CD4-positive, alpha-beta memory T cell (primary cell): ENCODE measurements at regions of chr11 and their contacts with region 1.

Region 1: DNA sequence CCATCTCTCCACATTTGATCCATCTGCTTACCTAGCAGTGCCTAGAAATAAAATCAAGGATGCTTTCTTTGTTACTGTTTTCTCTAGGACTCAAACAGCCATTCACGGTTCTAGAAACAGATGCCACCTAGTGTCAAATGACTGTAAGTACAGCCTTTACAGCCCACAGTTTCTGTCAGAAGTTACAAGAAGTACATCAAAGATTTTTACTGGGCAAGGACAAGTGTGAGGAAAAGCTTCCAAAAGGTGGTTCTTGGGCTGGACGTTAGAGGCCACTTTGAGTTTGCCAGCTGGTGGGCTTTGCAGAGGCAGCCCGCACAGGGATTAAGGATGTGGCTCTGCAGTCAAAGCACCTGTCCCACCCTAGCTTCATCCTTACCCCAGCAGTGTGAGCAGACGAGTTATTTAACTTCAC is 6.9 kb downstream of the KMT5B start:
- DNase-seq: peak in 4 of 5 donors; percentile 49 to 58 (median 56)
- H3K4me3 ChIP-seq: no peak overlapping the region
- H3K4me3 Mint-ChIP-seq: peak overlapping the region in 3 of 8 donors; percentile 1 to 58 (median 9)
- H3K27ac ChIP-seq: no peak overlapping the region
- H3K27ac Mint-ChIP-seq: peak overlapping the region in 4 of 7 donors; percentile 19 to 75 (median 46)
- H3K4me1 ChIP-seq: peaks cover 79% of the 10 kb centered on the region
- H3K4me1 Mint-ChIP-seq: peaks cover 45 to 86% (median 62%) of the 10 kb centered on the region in 4 donors
- H3K27me3 ChIP-seq: no peaks in the 10 kb centered on the region
- H3K27me3 Mint-ChIP-seq: no peaks in the 10 kb centered on the region

Region 2: DNA sequence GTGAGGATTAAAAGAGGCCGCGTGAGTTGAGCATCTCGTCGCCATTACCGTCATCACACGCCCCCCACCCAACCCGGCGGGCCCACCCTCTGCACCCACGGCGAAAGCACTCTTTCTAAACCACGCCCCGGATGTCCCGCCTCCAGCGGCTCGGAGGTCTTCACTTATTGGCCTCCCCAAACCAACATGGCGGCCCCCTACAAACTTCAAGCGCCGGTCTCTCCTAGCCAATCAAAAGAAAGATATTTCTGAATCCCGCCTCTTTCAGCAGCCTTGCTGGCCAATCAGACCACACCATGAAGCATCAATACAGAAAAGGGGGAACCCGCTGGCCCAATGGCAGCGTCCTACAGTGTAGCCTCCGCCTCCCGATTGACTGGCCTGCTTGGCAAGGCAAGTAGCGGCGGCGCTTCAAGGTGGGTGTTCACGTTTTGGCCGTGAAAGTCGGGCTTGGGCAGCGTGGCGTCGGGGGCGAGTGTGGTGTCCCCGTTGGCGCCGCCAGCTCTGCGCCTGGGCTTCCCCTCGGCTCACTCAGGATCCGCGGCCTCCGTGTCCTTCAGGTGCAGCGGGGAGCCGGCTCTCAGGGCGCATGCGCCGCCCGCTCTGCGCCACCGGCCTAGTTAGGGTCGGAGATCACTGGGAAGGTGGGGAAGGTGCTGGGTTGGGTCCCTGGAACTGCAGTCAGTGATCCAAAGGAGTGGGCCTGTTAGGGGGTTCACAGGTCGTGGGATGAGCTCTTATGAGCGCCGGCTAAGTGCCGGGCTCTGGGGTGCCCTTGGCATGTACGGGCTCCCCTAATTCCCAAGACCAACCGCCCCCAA is 175.7 kb before region 1 on chr11 and contains the start of gene NDUFS8:
- CTCF ChIA-PET with region 1: no interaction called
- POLR2A ChIA-PET with region 1: no interaction called
- intact Hi-C with region 1: loop called (anchors 10 kb)
- DNase-seq: peak; percentile 96 to 99 (median 98)
- H3K4me3 ChIP-seq: peak within 1 kb of the TSS; percentile 77 to 88
- H3K4me3 Mint-ChIP-seq: peak within 1 kb of the TSS; percentile 94 to 99 (median 97)
- H3K27ac ChIP-seq: peak within 1 kb of the TSS; percentile 88
- H3K27ac Mint-ChIP-seq: peak within 1 kb of the TSS; percentile 85 to 98 (median 94)
- H3K4me1 ChIP-seq: peaks cover 20% of the 10 kb centered on the region
- H3K4me1 Mint-ChIP-seq: peaks cover 10 to 29% (median 16%) of the 10 kb centered on the region in 4 donors
- H3K27me3 ChIP-seq: no peaks in the 10 kb centered on the region
- H3K27me3 Mint-ChIP-seq: peaks cover 0 to 5% of the 10 kb centered on the region in 2 donors
- total RNA-seq, gene NDUFS8: 70.0 to 79.3 TPM

Region 3: GRCh38 chr11:68066742-68067141 is 139.5 kb before region 1 on chr11:
- CTCF ChIA-PET with region 1: no interaction called
- POLR2A ChIA-PET with region 1: no interaction called
- intact Hi-C with region 1: no loop called
- DNase-seq: no peak
- H3K4me3 ChIP-seq: no peak overlapping the region
- H3K4me3 Mint-ChIP-seq: no peak overlapping the region
- H3K27ac ChIP-seq: no peak overlapping the region
- H3K27ac Mint-ChIP-seq: no peak overlapping the region
- H3K4me1 ChIP-seq: no peaks in the 10 kb centered on the region
- H3K4me1 Mint-ChIP-seq: no peaks in the 10 kb centered on the region
- H3K27me3 ChIP-seq: no peaks in the 10 kb centered on the region
- H3K27me3 Mint-ChIP-seq: no peaks in the 10 kb centered on the region

Region 4: GRCh38 chr11:68191661-68192579 is 14.3 kb before region 1 on chr11:
- CTCF ChIA-PET with region 1: interaction called, 51 read pairs
- POLR2A ChIA-PET with region 1: no interaction called
- intact Hi-C with region 1: no loop called
- DNase-seq: no peak
- H3K4me3 ChIP-seq: no peak overlapping the region
- H3K4me3 Mint-ChIP-seq: peak overlapping the region in 2 of 8 donors; percentile 3 to 36
- H3K27ac ChIP-seq: no peak overlapping the region
- H3K27ac Mint-ChIP-seq: peak overlapping the region in 4 of 7 donors; percentile 26 to 82 (median 32)
- H3K4me1 ChIP-seq: peaks cover 36% of the 10 kb centered on the region
- H3K4me1 Mint-ChIP-seq: peaks cover 36 to 57% (median 46%) of the 10 kb centered on the region in 4 donors
- H3K27me3 ChIP-seq: no peaks in the 10 kb centered on the region
- H3K27me3 Mint-ChIP-seq: no peaks in the 10 kb centered on the region